Right cardiac atrium (tissue), 5 donors: ENCODE measurements at regions of chr18 and their contacts with region 1.

Region 1: DNA sequence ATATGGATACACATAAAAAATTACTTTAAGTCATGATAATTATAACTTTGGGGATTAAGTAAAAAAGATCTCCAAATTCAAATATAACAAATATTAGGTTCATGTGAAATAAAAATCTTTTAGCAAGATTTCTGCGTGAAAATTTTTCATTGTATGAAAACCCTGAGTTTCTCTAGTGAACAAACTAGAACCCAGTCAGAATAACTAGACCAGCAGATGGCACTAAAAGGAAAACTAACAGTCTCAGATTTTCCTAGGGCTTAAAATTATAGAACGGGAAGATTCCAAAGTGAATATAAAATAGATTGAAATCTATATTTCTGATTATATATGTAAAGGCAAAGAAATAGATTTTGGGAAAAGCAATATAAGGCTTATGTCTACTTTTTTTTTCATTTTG is 43.3 kb downstream of the TMEM200C start:
- DNase-seq: no peak
- ATAC-seq: no peak
- H3K4me3 ChIP-seq: no peak overlapping the region
- H3K27ac ChIP-seq: no peak overlapping the region
- H3K4me1 ChIP-seq: no peaks in the 10 kb centered on the region
- H3K27me3 ChIP-seq: no peaks in the 10 kb centered on the region

Region 2: GRCh38 chr18:5600378-5601071 is 251.5 kb before region 1 on chr18:
- intact Hi-C with region 1: loop called in 1 of 4 experiments (anchors 5 kb)
- DNase-seq: no peak
- ATAC-seq: no peak
- H3K4me3 ChIP-seq: no peak overlapping the region
- H3K27ac ChIP-seq: no peak overlapping the region
- H3K4me1 ChIP-seq: peaks cover 2% of the 10 kb centered on the region
- H3K27me3 ChIP-seq: no peaks in the 10 kb centered on the region